ENCODE measurements at regions of chr1 and their contacts with region 1.

Region 1: GRCh38 chr1:221777431-221778072 is 35.7 kb upstream of the DUSP10 start:
- DNase-seq: peak; percentile 62
- ATAC-seq: peak; percentile 76
- H3K4me3 Mint-ChIP-seq: peak overlapping the region; percentile 11
- H3K27ac Mint-ChIP-seq: peak overlapping the region; percentile 87
- H3K4me1 Mint-ChIP-seq: peaks cover 63% of the 10 kb centered on the region
- H3K27me3 Mint-ChIP-seq: no peaks in the 10 kb centered on the region

Region 2: DNA sequence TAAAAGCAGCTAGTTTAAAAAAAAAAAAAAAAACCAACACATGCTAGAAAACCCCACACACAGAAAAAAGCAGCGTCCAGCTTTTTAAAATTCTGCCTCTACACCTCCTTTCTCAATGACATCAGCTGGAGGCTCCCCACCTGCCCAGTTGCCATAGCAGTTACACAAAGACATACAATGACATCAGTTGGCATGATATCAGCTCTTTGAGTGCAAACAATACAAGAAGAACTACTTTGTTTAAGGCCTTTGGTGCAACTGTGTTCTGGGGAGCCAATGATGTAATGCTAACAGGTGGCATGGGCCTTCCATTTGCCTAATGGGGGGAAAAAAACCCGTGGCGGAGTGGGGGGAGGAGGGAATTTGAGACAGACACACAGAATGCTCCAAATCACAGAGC is 68.6 kb before region 1 on chr1:
- CTCF ChIA-PET with region 1: no interaction called
- POLR2A ChIA-PET with region 1: no interaction called
- intact Hi-C with region 1: loop called (anchors 1 to 2 kb)
- DNase-seq: peak; percentile 47
- ATAC-seq: no peak
- H3K4me3 Mint-ChIP-seq: no peak overlapping the region
- H3K27ac Mint-ChIP-seq: peak overlapping the region; percentile 83
- H3K4me1 Mint-ChIP-seq: peaks cover 58% of the 10 kb centered on the region
- H3K27me3 Mint-ChIP-seq: no peaks in the 10 kb centered on the region

Region 3: DNA sequence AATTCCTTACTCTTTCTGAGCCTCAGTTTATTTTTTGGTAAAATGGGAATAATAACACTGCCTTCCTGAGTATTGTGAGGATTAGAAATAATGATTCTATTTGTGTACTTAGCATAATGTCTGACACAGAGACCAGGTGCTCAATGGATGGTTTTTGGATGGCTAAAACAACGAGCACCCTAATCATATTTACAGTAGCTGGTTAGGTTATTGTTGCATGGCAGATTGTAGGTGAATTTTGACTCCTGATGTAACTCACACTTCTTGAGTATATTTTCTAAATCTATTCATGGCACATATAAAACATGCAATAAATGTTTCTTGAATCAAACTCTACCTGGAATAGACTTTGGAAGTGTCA is 23.7 kb before region 1 on chr1:
- CTCF ChIA-PET with region 1: interaction called, 3 read pairs
- POLR2A ChIA-PET with region 1: no interaction called
- intact Hi-C with region 1: loop called (anchors 1 kb)
- DNase-seq: no peak
- ATAC-seq: peak; percentile 47
- H3K4me3 Mint-ChIP-seq: no peak overlapping the region
- H3K27ac Mint-ChIP-seq: peak overlapping the region; percentile 77
- H3K4me1 Mint-ChIP-seq: peaks cover 37% of the 10 kb centered on the region
- H3K27me3 Mint-ChIP-seq: peaks cover 5% of the 10 kb centered on the region

Region 4: GRCh38 chr1:221829327-221830015 is 51.9 kb after region 1 on chr1:
- CTCF ChIA-PET with region 1: interaction called, 3 read pairs
- POLR2A ChIA-PET with region 1: no interaction called
- intact Hi-C with region 1: loop called (anchors 1 to 2 kb)
- DNase-seq: peak; percentile 79
- ATAC-seq: peak; percentile 96
- H3K4me3 Mint-ChIP-seq: peak overlapping the region; percentile 31
- H3K27ac Mint-ChIP-seq: peak overlapping the region; percentile 86
- H3K4me1 Mint-ChIP-seq: peaks cover 55% of the 10 kb centered on the region
- H3K27me3 Mint-ChIP-seq: no peaks in the 10 kb centered on the region

Region 5: DNA sequence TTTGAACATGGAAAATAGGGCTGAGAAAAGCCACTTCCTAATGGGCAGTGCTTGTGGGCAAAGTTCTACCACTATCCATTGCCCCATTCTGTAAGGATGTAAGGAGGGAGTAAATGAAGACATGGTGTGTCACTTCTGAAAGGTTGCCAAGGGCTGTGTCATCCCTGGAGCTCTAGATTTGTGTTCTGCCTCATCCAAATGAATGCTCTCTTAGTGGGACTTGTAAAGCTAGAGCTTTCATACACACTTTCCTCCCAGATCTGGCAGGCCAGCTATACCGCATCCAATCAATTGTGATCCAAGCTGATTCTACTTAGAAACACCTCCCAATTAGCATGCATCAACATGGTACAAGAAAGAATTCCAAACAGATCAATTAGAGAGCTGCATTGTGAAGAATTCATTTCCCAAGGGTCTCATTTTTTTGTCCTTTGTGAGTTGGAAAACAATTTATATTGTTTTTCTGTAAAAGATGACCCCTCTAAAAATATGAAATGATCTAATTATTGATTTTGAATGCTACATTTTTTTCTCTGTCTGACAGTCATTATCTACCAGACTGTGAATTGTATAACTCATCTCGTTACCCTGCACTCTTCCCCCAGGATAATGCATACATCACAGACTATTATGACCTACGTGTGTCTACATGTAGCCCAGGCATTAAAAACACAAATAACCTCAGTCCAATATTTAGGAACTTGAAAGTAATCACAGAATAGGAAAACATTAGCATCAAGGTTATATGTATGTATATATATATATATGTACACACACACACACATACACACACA is 81.5 kb after region 1 on chr1:
- CTCF ChIA-PET with region 1: no interaction called
- POLR2A ChIA-PET with region 1: no interaction called
- intact Hi-C with region 1: no loop called
- DNase-seq: no peak
- ATAC-seq: no peak
- H3K4me3 Mint-ChIP-seq: no peak overlapping the region
- H3K27ac Mint-ChIP-seq: no peak overlapping the region
- H3K4me1 Mint-ChIP-seq: peaks cover 11% of the 10 kb centered on the region
- H3K27me3 Mint-ChIP-seq: no peaks in the 10 kb centered on the region

Region 6: GRCh38 chr1:221907166-221907932 is 129.8 kb after region 1 on chr1:
- CTCF ChIA-PET with region 1: no interaction called
- POLR2A ChIA-PET with region 1: no interaction called
- intact Hi-C with region 1: no loop called
- DNase-seq: no peak
- ATAC-seq: no peak
- H3K4me3 Mint-ChIP-seq: no peak overlapping the region
- H3K27ac Mint-ChIP-seq: no peak overlapping the region
- H3K4me1 Mint-ChIP-seq: peaks cover 10% of the 10 kb centered on the region
- H3K27me3 Mint-ChIP-seq: peaks cover 2% of the 10 kb centered on the region

Region 7: DNA sequence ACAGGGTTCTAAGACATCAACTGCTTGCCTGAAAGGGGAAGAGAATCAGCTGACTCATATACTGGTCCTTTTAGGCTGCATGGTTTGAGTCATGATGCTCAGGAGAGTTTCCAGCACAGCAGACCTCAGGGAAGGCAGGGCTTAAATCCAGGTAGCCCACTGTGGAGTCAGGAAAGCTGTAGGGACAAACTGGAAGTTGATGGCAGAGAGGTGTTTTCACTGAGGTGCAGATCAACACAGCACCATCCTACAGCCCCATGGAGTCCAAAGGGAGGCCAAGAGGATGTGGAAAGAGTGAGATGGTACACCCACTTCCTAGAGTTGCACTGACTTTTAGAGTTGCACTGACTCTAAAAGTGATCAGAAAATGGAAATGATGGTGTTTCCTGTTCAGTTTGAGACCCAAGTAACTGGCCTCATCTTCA is 216.7 kb after region 1 on chr1:
- CTCF ChIA-PET with region 1: no interaction called
- POLR2A ChIA-PET with region 1: no interaction called
- intact Hi-C with region 1: loop called (anchors 5 to 10 kb)
- DNase-seq: peak; percentile 50
- ATAC-seq: peak; percentile 81
- H3K4me3 Mint-ChIP-seq: no peak overlapping the region
- H3K27ac Mint-ChIP-seq: peak overlapping the region; percentile 89
- H3K4me1 Mint-ChIP-seq: peaks cover 32% of the 10 kb centered on the region
- H3K27me3 Mint-ChIP-seq: no peaks in the 10 kb centered on the region

Region 8: DNA sequence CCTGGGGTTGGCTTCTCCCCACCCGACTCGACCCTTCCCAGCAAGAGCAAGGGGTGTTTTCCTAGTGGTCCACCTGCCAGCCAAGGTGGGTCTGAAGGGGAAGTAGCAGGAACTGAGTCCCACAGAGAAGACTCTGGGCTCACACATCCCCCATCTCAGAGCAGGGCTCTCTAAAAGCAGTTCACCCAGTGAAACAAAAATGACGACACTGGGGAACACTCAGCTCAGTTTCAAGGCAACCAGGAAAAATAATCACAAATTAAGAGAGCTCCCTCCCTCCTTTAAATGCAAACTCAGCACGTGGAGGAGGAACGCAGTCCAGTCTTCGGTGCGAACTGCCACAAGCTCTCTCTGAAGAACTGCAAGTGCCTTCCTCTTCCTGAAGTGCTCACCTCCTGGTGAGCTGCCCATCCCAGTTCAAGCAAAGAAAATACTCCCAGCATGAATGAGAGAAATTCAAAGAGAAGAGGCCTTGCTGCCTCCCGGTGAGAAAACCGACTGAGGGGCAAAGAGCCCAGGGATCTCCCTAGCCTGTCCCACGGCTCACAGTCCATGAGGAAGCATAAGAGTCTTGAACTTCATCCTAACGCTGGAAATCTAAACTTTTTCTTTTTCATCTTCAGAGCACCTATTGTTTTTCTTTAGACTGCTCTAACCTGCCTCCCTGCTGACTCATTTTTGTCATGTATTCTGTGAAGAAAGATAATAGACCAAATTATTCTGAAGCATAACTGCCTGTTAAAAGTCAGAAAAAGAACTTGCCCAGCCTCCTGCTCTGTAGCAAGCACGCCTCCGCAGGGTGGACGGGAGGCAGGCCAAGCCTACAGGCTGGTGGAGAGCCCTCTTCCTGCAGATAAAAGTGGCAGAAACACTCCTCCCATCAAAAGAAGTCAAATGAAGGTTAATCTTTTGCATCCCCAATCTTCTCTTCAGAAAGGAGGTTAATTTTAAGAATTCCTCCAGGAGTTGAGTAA is 489.0 kb after region 1 on chr1:
- CTCF ChIA-PET with region 1: no interaction called
- POLR2A ChIA-PET with region 1: no interaction called
- intact Hi-C with region 1: no loop called
- DNase-seq: no peak
- ATAC-seq: no peak
- H3K4me3 Mint-ChIP-seq: no peak overlapping the region
- H3K27ac Mint-ChIP-seq: no peak overlapping the region
- H3K4me1 Mint-ChIP-seq: peaks cover 7% of the 10 kb centered on the region
- H3K27me3 Mint-ChIP-seq: no peaks in the 10 kb centered on the region

Measured in activated CD4-positive, alpha-beta T cell treated with anti-CD3 and anti-CD28 coated beads for 36 hours (primary cell).